Activated CD4-positive, alpha-beta T cell treated with anti-CD3 and anti-CD28 coated beads for 36 hours (primary cell): ENCODE measurements at regions of chr2 and their contacts with region 1.

Region 1: GRCh38 chr2:20051532-20052228 is at the start of gene LAPTM4A:
- DNase-seq: peak; percentile 99
- ATAC-seq: peak; percentile 98
- H3K4me3 Mint-ChIP-seq: no peak within 1 kb of the TSS
- H3K27ac Mint-ChIP-seq: no peak within 1 kb of the TSS
- H3K4me1 Mint-ChIP-seq: peaks cover 27% of the 10 kb centered on the region
- H3K27me3 Mint-ChIP-seq: peaks cover 11% of the 10 kb centered on the region
- total RNA-seq, gene LAPTM4A: 22.5 to 41.9 TPM

Region 2: GRCh38 chr2:18560031-18560796 is 1491.5 kb before region 1 on chr2 and contains the start of gene RDH14:
- CTCF ChIA-PET with region 1: no interaction called
- POLR2A ChIA-PET with region 1: no interaction called
- intact Hi-C with region 1: loop called in 1 of 2 experiments (anchors 1 kb)
- DNase-seq: peak; percentile 94
- ATAC-seq: peak; percentile 94
- H3K4me3 Mint-ChIP-seq: peak within 1 kb of the TSS; percentile 84
- H3K27ac Mint-ChIP-seq: peak within 1 kb of the TSS; percentile 90
- H3K4me1 Mint-ChIP-seq: peaks cover 32% of the 10 kb centered on the region
- H3K27me3 Mint-ChIP-seq: no peaks in the 10 kb centered on the region
- total RNA-seq, gene RDH14: 16.1 to 18.3 TPM

Region 3: GRCh38 chr2:19835781-19836281 is 215.8 kb before region 1 on chr2:
- CTCF ChIA-PET with region 1: no interaction called
- POLR2A ChIA-PET with region 1: no interaction called
- intact Hi-C with region 1: no loop called
- DNase-seq: no peak
- ATAC-seq: no peak
- H3K4me3 Mint-ChIP-seq: no peak overlapping the region
- H3K27ac Mint-ChIP-seq: no peak overlapping the region
- H3K4me1 Mint-ChIP-seq: peaks cover 5% of the 10 kb centered on the region
- H3K27me3 Mint-ChIP-seq: peaks cover 22% of the 10 kb centered on the region

Region 4: GRCh38 chr2:19901442-19902215 is 150.1 kb before region 1 on chr2 and contains the start of gene TTC32:
- CTCF ChIA-PET with region 1: interaction called, 3 read pairs
- POLR2A ChIA-PET with region 1: interaction called, 4 read pairs
- intact Hi-C with region 1: loop called (anchors 1 to 2 kb)
- DNase-seq: peak; percentile 95
- ATAC-seq: peak; percentile 88
- H3K4me3 Mint-ChIP-seq: peak within 1 kb of the TSS; percentile 84
- H3K27ac Mint-ChIP-seq: peak within 1 kb of the TSS; percentile 93
- H3K4me1 Mint-ChIP-seq: peaks cover 46% of the 10 kb centered on the region
- H3K27me3 Mint-ChIP-seq: peaks cover 11% of the 10 kb centered on the region
- total RNA-seq, gene TTC32: 8.8 to 15.7 TPM

Region 5: DNA sequence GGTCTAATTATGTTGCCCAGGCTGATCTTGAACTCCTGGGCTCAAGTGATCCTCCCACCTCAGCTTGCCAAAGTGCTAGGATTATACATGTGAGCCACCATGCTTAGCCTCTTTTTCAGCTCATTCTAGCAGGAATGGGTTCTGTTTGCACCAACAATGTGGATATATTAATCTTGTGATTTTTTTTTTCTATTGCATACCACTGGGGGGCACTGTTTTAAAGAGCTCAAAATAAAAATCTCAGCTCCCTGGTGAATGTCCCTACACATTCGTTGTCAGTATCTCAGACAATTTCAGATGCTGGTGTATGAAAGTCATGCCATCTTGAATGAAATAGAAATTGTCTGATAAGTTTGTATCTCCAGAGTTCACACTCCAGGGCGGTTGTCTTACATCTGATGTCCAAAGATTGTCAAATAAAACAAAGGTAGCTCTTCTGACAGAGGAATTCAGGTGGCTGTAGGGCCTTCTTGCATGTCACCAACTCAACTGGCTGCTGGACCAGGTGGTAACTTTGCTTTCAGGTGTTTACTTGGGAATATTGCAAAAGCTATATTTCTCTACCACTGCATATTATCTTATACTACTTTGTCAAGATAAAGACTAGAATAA is 36.1 kb before region 1 on chr2:
- CTCF ChIA-PET with region 1: interaction called, 11 read pairs
- POLR2A ChIA-PET with region 1: interaction called, 3 read pairs
- intact Hi-C with region 1: loop called in 1 of 2 experiments (anchors 1 kb)
- DNase-seq: no peak
- ATAC-seq: peak; percentile 42
- H3K4me3 Mint-ChIP-seq: no peak overlapping the region
- H3K27ac Mint-ChIP-seq: no peak overlapping the region
- H3K4me1 Mint-ChIP-seq: peaks cover 3% of the 10 kb centered on the region
- H3K27me3 Mint-ChIP-seq: peaks cover 25% of the 10 kb centered on the region

Region 6: DNA sequence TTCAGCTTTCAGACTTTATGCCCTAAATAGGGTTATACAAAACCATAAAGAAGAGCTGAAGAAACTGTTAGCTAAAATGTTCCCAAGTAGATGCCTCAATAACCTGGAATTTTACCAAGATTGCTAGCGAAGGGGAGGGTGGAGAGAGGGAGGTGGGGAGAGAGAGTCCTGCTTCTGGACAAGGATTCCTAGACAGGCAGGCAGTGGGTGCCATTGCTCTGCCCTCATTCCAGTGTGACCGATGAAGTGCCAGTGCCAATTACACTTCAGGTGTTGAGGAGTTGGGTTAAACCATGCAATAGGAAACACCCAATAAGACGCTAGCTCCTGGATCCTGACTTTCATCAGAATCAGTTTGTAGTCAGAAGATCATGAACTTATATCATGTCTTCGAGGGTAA is 18.3 kb before region 1 on chr2:
- CTCF ChIA-PET with region 1: no interaction called
- POLR2A ChIA-PET with region 1: no interaction called
- intact Hi-C with region 1: no loop called
- DNase-seq: no peak
- ATAC-seq: no peak
- H3K4me3 Mint-ChIP-seq: no peak overlapping the region
- H3K27ac Mint-ChIP-seq: no peak overlapping the region
- H3K4me1 Mint-ChIP-seq: no peaks in the 10 kb centered on the region
- H3K27me3 Mint-ChIP-seq: no peaks in the 10 kb centered on the region

Region 7: GRCh38 chr2:20446917-20447436 is 395.3 kb after region 1 on chr2 and contains the start of gene RHOB:
- CTCF ChIA-PET with region 1: no interaction called
- POLR2A ChIA-PET with region 1: interaction called, 3 read pairs
- intact Hi-C with region 1: loop called in 1 of 2 experiments (anchors 5 kb)
- DNase-seq: peak; percentile 93
- ATAC-seq: peak; percentile 99
- H3K4me3 Mint-ChIP-seq: peak within 1 kb of the TSS; percentile 71
- H3K27ac Mint-ChIP-seq: no peak within 1 kb of the TSS
- H3K4me1 Mint-ChIP-seq: no peaks in the 10 kb centered on the region
- H3K27me3 Mint-ChIP-seq: peaks cover 23% of the 10 kb centered on the region
- total RNA-seq, gene RHOB: 7.5 TPM

Region 8: DNA sequence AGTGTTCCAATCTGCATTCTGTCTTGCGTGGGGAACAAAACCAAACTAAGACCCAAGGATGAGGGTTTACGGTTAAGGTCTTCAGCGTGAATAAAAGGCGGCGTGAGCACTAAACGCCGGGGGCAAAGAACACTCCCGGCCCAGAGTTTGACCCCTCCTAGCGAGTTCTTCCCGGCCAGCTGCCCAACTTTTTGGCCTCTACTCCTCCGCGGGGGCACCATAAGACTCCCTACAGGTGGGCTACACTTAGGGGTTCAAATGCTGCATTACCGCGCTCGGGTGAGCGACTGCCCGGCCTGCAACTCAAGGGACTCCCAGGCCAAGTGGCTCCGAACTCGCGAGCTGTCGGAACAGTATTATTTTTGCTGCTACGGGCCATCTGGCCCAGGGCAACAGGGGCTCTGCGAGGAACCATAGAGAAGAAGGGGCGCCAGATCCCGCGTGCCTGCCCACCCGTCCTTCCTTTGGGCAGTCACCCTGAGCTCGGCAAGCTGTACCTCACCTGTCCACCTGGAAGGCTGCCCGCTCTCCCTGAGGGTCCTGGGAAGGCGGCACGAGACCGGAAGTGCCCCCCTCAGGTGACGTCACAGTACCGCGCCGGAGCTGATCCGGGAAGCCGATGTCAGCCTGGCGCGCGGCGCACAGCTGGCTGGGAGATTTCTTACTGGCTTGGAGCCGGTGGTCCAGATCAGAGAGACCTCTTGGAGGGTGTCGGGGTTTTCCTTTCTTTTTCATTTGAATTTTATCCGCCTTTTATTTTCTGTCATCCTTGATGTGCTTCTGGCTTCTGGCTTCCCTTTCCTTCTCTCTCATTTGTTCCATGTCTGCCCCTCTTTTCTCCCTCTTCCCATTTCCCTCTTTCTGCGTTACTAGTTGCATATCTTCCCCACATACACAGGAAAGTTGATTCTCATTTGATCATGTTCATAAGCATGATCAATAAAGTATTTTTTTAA is 771.1 kb after region 1 on chr2 and contains the start of gene LDAH:
- CTCF ChIA-PET with region 1: no interaction called
- POLR2A ChIA-PET with region 1: no interaction called
- intact Hi-C with region 1: loop called in 1 of 2 experiments (anchors 5 kb)
- DNase-seq: peak; percentile 92
- ATAC-seq: peak; percentile 79
- H3K4me3 Mint-ChIP-seq: peak within 1 kb of the TSS; percentile 98
- H3K27ac Mint-ChIP-seq: peak within 1 kb of the TSS; percentile 99
- H3K4me1 Mint-ChIP-seq: peaks cover 26% of the 10 kb centered on the region
- H3K27me3 Mint-ChIP-seq: no peaks in the 10 kb centered on the region
- total RNA-seq, gene LDAH: 27.0 to 32.8 TPM